ENCODE measurements at regions of chr5 and their contacts with region 1.

Region 1: GRCh38 chr5:80083101-80083890 is 48.1 kb downstream of the THBS4 start:
- DNase-seq: peak; percentile 54 to 74 (median 66)
- H3K4me3 ChIP-seq: peak overlapping the region in 6 of 7 experiments; percentile 2 to 74 (median 33)
- H3K27ac ChIP-seq: no peak overlapping the region
- H3K4me1 ChIP-seq: peaks cover 0 to 8% (median 5%) of the 10 kb centered on the region in 4 experiments
- H3K27me3 ChIP-seq: no peaks in the 10 kb centered on the region

Region 2: DNA sequence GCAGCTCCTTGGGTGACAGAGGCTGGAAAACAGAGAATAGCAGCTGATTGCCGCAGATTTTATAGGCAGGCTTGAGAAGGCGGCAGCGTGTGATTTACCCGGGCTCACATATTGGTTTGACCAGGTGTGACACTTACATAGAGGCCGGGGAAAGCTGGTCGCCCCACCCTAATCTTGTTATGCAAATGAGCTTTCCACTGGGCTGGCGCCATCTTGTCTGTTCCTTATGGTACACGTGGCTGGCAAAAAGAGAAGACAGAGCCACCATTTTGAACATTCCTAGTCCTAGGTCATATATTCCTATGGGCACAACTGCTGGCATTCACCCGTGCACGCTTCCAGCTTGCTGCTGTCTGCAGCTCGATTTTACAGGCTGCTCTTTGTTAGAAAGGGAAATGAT is 225.2 kb after region 1 on chr5:
- CTCF ChIA-PET with region 1: interaction called, 68 read pairs
- POLR2A ChIA-PET with region 1: no interaction called
- DNase-seq: no peak
- H3K4me3 ChIP-seq: no peak overlapping the region
- H3K27ac ChIP-seq: no peak overlapping the region
- H3K4me1 ChIP-seq: no peaks in the 10 kb centered on the region
- H3K27me3 ChIP-seq: no peaks in the 10 kb centered on the region